ENCODE measurements at regions of chr15 and their contacts with region 1.

Region 1: GRCh38 chr15:41904541-41905005 is 10.7 kb upstream of the SPTBN5 start:
- DNase-seq: peak; percentile 68 to 76 (median 69)
- H3K4me3 ChIP-seq: no peak overlapping the region
- H3K4me3 Mint-ChIP-seq: no peak overlapping the region
- H3K27ac ChIP-seq: no peak overlapping the region
- H3K27ac Mint-ChIP-seq: peak overlapping the region in 6 of 7 donors; percentile 63 to 89 (median 80)
- H3K4me1 ChIP-seq: peaks cover 7% of the 10 kb centered on the region
- H3K4me1 Mint-ChIP-seq: peaks cover 6 to 13% (median 10%) of the 10 kb centered on the region in 4 donors
- H3K27me3 ChIP-seq: no peaks in the 10 kb centered on the region
- H3K27me3 Mint-ChIP-seq: no peaks in the 10 kb centered on the region

Region 2: DNA sequence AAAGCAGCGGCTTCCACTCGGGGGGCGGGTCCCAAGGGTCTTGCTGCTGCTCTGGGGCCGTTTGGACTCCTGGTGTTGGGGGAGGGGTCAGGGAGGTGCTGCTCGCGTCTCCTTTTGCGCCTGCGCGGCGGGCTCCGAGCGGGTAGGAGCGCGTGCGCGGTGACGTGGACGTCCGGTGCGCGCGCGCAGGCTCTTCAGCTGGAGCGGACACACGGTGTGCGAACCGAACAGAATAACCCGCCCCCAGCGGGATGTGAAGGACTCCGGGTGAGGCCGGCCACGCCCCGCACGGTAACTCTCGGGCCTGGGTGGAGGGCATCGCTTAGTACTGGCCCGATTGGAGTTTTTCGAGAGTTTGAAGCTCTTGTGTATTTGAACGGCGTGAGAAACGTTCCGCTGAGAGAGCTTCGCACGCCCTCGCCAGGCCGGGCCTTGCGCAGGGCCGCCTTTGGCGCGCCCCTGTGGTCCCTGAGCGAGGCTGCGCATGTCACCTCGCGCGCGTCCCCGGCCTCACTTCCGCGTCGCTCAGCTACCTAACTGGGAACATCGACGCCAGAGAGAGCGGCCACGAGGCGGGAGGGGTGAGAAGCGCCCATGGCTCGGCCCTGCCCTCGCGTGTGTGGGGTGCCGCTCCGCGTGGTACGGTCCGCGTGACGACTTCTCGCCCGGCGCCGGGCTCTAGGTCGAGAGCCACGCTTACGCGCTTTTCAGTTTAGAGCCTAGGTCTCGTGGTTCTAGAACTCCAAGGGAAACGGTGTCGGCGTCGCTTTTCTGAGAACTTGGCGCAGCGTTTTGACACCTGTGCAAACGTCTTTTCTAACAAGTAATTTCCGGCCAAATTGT is 244.1 kb before region 1 on chr15 and contains the start of gene MGA:
- CTCF ChIA-PET with region 1: no interaction called
- POLR2A ChIA-PET with region 1: no interaction called
- intact Hi-C with region 1: no loop called
- DNase-seq: peak; percentile 90 to 94 (median 92)
- H3K4me3 ChIP-seq: peak within 1 kb of the TSS; percentile 71 to 72
- H3K4me3 Mint-ChIP-seq: peak within 1 kb of the TSS; percentile 84 to 96 (median 94)
- H3K27ac ChIP-seq: peak within 1 kb of the TSS; percentile 67
- H3K27ac Mint-ChIP-seq: peak within 1 kb of the TSS; percentile 91 to 99 (median 97)
- H3K4me1 ChIP-seq: peaks cover 59% of the 10 kb centered on the region
- H3K4me1 Mint-ChIP-seq: peaks cover 30 to 65% (median 43%) of the 10 kb centered on the region in 4 donors
- H3K27me3 ChIP-seq: no peaks in the 10 kb centered on the region
- H3K27me3 Mint-ChIP-seq: peaks cover 0 to 1% of the 10 kb centered on the region in 2 donors
- total RNA-seq, gene MGA: 70.1 to 74.9 TPM

Region 3: DNA sequence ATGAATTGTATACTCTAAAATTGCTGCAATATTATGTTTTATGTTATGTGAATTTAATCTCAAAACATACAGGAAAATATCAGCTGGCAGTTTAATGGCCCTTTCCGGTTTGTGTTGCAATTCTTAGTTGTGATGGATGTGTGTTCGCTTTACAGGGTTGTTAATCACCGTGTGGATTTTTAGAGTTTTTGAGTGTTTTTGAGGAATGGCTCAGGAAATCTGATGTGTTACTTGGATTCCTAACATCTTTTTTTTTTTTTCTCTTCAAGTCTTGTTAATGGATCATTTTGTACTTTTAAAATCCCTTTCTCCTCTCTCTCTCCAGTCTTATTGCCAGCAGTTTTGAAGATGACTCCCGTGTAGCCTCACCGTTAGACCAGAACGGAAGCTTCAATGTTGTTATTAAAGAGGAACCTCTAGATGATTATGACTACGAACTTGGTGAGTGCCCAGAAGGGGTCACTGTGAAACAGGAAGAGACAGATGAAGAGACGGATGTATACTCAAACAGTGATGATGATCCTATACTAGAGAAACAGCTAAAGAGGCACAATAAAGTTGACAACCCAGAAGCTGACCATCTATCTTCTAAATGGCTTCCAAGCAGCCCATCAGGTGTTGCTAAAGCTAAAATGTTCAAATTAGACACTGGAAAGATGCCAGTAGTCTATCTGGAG is 208.7 kb before region 1 on chr15:
- CTCF ChIA-PET with region 1: interaction called, 15 read pairs
- POLR2A ChIA-PET with region 1: no interaction called
- intact Hi-C with region 1: loop called (anchors 1 kb)
- DNase-seq: peak; percentile 45 to 67 (median 52)
- H3K4me3 ChIP-seq: no peak overlapping the region
- H3K4me3 Mint-ChIP-seq: peak overlapping the region; percentile 2 to 73 (median 54)
- H3K27ac ChIP-seq: peak overlapping the region; percentile 11
- H3K27ac Mint-ChIP-seq: peak overlapping the region; percentile 6 to 92 (median 77)
- H3K4me1 ChIP-seq: peaks cover 23% of the 10 kb centered on the region
- H3K4me1 Mint-ChIP-seq: peaks cover 34 to 54% (median 44%) of the 10 kb centered on the region in 4 donors
- H3K27me3 ChIP-seq: no peaks in the 10 kb centered on the region
- H3K27me3 Mint-ChIP-seq: no peaks in the 10 kb centered on the region

Region 4: DNA sequence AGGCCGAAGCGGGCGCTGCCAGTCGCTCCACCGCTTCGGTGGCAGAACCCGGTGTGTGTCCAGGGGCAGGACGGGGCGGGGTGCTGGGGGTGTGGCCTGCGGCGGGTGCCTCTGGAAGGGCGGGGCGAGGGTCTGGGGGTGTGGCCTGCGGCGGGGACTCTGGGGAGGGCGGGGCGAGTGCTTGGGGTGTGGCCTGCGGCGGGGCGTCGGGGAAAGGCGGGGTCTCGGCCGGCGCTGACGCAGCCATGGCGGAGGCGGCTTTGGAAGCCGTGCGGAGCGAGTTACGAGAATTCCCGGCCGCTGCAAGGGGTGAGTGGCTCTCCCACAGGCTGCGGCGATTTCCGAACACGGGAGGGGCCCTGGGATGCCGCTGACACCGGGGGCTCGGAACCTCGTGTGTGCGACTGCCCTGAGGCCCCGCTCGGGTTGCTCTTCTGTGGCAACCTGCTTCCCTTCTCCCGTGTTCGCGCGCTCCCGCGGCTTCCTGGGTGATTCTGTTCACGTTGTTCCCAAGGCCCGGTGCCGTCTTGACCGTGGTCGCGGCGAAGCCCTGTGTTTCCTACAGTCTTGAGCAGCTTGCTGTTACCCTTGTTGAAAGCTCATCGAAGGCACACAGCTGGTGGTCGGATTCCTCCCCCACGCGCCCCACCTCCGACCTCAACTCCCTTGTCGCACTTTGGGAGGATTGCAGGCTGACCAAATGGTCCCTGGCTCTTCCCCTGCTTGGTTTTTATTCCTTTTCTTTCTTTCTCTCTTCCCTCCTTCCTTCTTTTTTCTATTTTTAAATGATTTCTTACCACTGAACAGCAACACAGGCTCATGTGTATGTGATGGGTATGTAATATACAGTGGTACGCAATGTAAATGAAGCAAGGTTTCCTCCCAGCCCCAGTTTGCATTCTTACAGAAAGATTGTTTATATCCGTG is 76.4 kb before region 1 on chr15 and contains the start of gene JMJD7:
- CTCF ChIA-PET with region 1: interaction called, 16 read pairs
- POLR2A ChIA-PET with region 1: interaction called, 8 read pairs
- intact Hi-C with region 1: loop called (anchors 1 kb)
- DNase-seq: peak; percentile 88 to 92 (median 89)
- H3K4me3 ChIP-seq: peak within 1 kb of the TSS; percentile 94 to 95
- H3K4me3 Mint-ChIP-seq: peak within 1 kb of the TSS; percentile 91 to 99 (median 94)
- H3K27ac ChIP-seq: peak within 1 kb of the TSS; percentile 74
- H3K27ac Mint-ChIP-seq: peak within 1 kb of the TSS; percentile 83 to 98 (median 95)
- H3K4me1 ChIP-seq: peaks cover 48% of the 10 kb centered on the region
- H3K4me1 Mint-ChIP-seq: peaks cover 30 to 54% (median 43%) of the 10 kb centered on the region in 4 donors
- H3K27me3 ChIP-seq: no peaks in the 10 kb centered on the region
- H3K27me3 Mint-ChIP-seq: no peaks in the 10 kb centered on the region
- total RNA-seq, gene JMJD7: 75.0 to 78.5 TPM

Region 5: GRCh38 chr15:41849861-41850260 is 54.7 kb before region 1 on chr15:
- CTCF ChIA-PET with region 1: interaction called, 12 read pairs
- POLR2A ChIA-PET with region 1: no interaction called
- intact Hi-C with region 1: no loop called
- DNase-seq: no peak
- H3K4me3 ChIP-seq: no peak overlapping the region
- H3K4me3 Mint-ChIP-seq: no peak overlapping the region
- H3K27ac ChIP-seq: no peak overlapping the region
- H3K27ac Mint-ChIP-seq: peak overlapping the region in 4 of 7 donors; percentile 7 to 68 (median 36)
- H3K4me1 ChIP-seq: no peaks in the 10 kb centered on the region
- H3K4me1 Mint-ChIP-seq: peaks cover 0 to 2% (median 0%) of the 10 kb centered on the region in 4 donors
- H3K27me3 ChIP-seq: no peaks in the 10 kb centered on the region
- H3K27me3 Mint-ChIP-seq: no peaks in the 10 kb centered on the region

Region 6: DNA sequence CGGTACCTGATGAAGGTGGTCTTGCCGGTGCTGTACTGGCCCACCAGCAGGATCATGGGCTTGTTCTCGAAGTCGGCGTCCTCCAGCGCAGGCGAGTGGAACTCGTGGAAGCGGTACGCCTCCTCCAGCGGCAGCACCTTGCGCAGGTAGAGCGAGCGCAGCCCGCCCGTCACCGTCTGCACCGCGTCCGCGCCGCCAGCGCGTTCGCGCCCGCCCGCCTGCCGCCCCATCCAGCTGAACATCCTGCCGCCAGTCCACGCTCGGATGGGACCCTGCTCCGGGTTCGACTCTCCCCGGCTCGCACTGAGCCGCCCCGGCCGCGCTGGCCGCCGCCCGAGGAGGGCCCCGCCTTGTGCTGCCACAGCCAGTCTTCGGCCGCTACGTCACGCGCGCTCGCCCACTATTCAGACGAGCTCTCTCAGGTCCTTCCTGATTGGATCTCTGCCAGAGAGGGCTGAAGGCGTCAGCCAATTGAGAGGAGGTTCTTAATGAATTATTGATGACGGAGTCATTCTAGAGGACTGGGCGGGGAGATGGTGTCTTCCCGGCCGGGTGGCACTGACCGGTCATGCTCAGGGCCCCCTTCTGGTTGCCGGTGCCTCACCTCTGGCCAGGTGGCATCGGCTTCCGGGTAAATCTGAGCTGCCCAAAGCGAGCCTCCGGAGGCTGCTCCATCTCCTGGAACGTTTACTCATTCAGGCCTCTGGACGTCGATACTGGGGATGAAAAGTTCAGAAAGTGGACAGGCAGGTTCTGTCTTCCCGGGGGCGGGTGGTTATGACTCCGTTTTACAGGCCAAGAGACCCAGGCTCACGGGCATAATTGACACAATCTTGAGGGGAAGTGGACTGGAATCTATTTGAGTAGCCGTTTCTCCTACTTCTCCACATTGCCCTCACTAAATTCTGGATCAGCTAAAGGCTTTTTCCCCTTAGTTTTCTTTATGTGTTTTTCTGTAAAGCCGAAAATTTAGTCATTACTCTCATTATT is 68.0 kb after region 1 on chr15 and contains the start of gene EHD4:
- CTCF ChIA-PET with region 1: interaction called, 5 read pairs
- POLR2A ChIA-PET with region 1: interaction called, 5 read pairs
- intact Hi-C with region 1: loop called (anchors 5 kb)
- DNase-seq: peak; percentile 94 to 97 (median 95)
- H3K4me3 ChIP-seq: peak within 1 kb of the TSS; percentile 76 to 79
- H3K4me3 Mint-ChIP-seq: peak within 1 kb of the TSS; percentile 92 to 97 (median 94)
- H3K27ac ChIP-seq: peak within 1 kb of the TSS; percentile 87
- H3K27ac Mint-ChIP-seq: peak within 1 kb of the TSS; percentile 85 to 98 (median 97)
- H3K4me1 ChIP-seq: peaks cover 49% of the 10 kb centered on the region
- H3K4me1 Mint-ChIP-seq: peaks cover 31 to 53% (median 40%) of the 10 kb centered on the region in 4 donors
- H3K27me3 ChIP-seq: no peaks in the 10 kb centered on the region
- H3K27me3 Mint-ChIP-seq: peaks cover 5% of the 10 kb centered on the region in 2 donors
- total RNA-seq, gene EHD4: 15.2 to 15.6 TPM

Region 7: GRCh38 chr15:42273102-42273899 is 368.7 kb after region 1 on chr15 and contains the starts of genes GANC and TMEM87A:
- CTCF ChIA-PET with region 1: no interaction called
- POLR2A ChIA-PET with region 1: no interaction called
- intact Hi-C with region 1: no loop called
- DNase-seq: peak; percentile 94 to 98 (median 95)
- H3K4me3 ChIP-seq: peak within 1 kb of the TSS; percentile 73 to 98
- H3K4me3 Mint-ChIP-seq: peak within 1 kb of the TSS; percentile 92 to 100 (median 99)
- H3K27ac ChIP-seq: peak within 1 kb of the TSS; percentile 87
- H3K27ac Mint-ChIP-seq: peak within 1 kb of the TSS; percentile 95 to 100 (median 99)
- H3K4me1 ChIP-seq: peaks cover 52% of the 10 kb centered on the region
- H3K4me1 Mint-ChIP-seq: peaks cover 38 to 69% (median 53%) of the 10 kb centered on the region in 4 donors
- H3K27me3 ChIP-seq: no peaks in the 10 kb centered on the region
- H3K27me3 Mint-ChIP-seq: peaks cover 0 to 2% of the 10 kb centered on the region in 2 donors
- total RNA-seq, gene GANC: 61.7 to 63.4 TPM
- total RNA-seq, gene TMEM87A: 49.9 to 56.6 TPM

Measured in CD4-positive, alpha-beta memory T cell (primary cell).